ENCODE measurements at regions of chr1 and their contacts with region 1.

Region 1: DNA sequence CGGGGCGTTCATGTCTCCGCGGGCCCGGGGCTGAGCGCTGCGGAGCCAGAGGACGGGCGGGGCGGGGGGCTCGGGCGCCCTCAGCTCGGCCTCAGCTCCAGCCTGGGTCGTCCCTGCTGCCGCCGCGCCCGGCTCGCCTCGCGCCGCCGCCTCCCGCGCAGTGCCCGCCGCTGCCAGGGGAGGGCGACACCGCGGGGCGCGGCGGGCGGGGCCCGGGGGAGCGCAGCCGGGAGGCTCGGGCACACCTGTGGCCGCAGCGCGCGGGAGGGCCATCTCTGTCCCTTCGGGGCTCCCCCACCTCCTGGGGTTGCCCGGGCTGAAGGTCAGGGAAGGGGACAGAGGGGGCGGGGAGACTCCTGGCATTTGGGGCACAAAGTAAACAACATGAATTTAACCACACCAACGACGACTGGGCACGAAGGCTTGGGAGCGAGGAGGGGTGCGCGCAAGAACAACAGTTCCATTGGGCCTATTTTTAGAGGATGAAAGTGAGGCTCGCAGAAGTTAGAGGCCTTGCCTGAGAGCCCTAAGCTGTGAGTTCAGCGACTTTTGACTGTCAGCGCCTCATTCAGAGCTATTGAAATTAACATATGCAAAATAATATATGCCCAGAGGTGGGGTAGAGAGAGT is at the start of gene FAM131C:
- DNase-seq: no peak
- ATAC-seq: peak; percentile 75
- H3K4me3 ChIP-seq: no peak within 1 kb of the TSS
- H3K27ac ChIP-seq: no peak within 1 kb of the TSS
- H3K4me1 ChIP-seq: peaks cover 4 to 6% of the 10 kb centered on the region in 2 donors
- H3K27me3 ChIP-seq: peaks cover 6 to 39% of the 10 kb centered on the region in 2 donors
- CTCF ChIP-seq: peak in 1 of 2 donors; percentile 31
- polyA plus RNA-seq, gene FAM131C: 0.08 to 0.21 (median 0.17) TPM in 4 of 6 donors, not detected in the others

Region 2: DNA sequence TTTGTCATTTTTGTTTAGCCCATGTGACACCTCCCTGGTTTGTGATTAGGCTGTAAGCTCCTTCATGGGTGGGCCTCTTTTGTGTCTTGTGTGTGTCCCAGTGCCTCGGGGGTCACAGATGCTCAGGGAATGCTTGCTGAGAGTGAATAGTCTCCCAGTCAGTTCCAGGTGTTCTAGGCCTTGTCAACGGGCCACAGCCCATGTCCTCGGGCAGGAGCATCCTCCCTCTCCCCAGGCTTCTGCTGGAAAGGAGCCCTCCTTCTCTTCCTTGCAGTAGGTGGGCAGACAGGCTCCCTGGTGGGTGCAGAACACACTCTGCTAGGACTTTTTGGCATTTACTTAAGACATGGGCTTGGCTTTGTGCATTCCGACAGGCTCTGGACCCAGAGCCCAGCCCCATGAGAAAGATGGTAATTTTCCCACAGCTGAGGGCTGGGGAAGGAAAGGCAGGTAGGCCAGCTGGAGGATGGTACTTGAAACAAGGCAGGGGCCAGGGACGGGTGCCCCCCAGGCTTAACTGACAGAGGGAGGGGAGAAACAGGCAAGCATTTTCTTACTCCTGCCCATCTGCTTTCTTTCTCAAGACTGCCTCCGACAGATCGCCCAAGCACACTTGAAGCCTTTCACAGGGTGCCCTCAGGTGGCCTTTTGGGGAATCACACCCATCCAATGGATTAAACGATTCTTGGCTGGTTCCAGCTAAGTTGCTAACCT is 170.5 kb after region 1 on chr1:
- intact Hi-C with region 1: loop called in 1 of 2 experiments (anchors 5 kb)
- DNase-seq: peak in 2 of 4 donors; percentile 62 to 82
- ATAC-seq: peak; percentile 86
- H3K4me3 ChIP-seq: no peak overlapping the region
- H3K27ac ChIP-seq: no peak overlapping the region
- H3K4me1 ChIP-seq: peaks cover 14 to 19% of the 10 kb centered on the region in 2 donors
- H3K27me3 ChIP-seq: no peaks in the 10 kb centered on the region
- CTCF ChIP-seq: peak; percentile 74 to 75

Measured in left lung (tissue), 14 donors.